ENCODE measurements at regions of chr16 and their contacts with region 1.

Region 1: GRCh38 chr16:71311553-71312158 is 22.5 kb upstream of the CMTR2 start:
- DNase-seq: peak; percentile 25
- ATAC-seq: no peak
- H3K4me3 Mint-ChIP-seq: no peak overlapping the region
- H3K27ac Mint-ChIP-seq: no peak overlapping the region
- H3K4me1 Mint-ChIP-seq: no peaks in the 10 kb centered on the region
- H3K27me3 Mint-ChIP-seq: peaks cover 33% of the 10 kb centered on the region
- CTCF ChIP-seq: peak; percentile 90

Region 2: GRCh38 chr16:71249399-71249798 is 62.3 kb before region 1 on chr16:
- CTCF ChIA-PET with region 1: interaction called, 24 read pairs
- POLR2A ChIA-PET with region 1: no interaction called
- intact Hi-C with region 1: no loop called
- DNase-seq: no peak
- ATAC-seq: no peak
- H3K4me3 Mint-ChIP-seq: no peak overlapping the region
- H3K27ac Mint-ChIP-seq: no peak overlapping the region
- H3K4me1 Mint-ChIP-seq: no peaks in the 10 kb centered on the region
- H3K27me3 Mint-ChIP-seq: no peaks in the 10 kb centered on the region
- CTCF ChIP-seq: no peak

Region 3: GRCh38 chr16:71293919-71294318 is 17.7 kb before region 1 on chr16:
- CTCF ChIA-PET with region 1: interaction called, 15 read pairs
- POLR2A ChIA-PET with region 1: no interaction called
- intact Hi-C with region 1: no loop called
- DNase-seq: no peak
- ATAC-seq: no peak
- H3K4me3 Mint-ChIP-seq: no peak overlapping the region
- H3K27ac Mint-ChIP-seq: no peak overlapping the region
- H3K4me1 Mint-ChIP-seq: no peaks in the 10 kb centered on the region
- H3K27me3 Mint-ChIP-seq: peaks cover 20% of the 10 kb centered on the region
- CTCF ChIP-seq: no peak

Region 4: GRCh38 chr16:71328151-71328550 is 16.5 kb after region 1 on chr16:
- CTCF ChIA-PET with region 1: interaction called, 12 read pairs
- POLR2A ChIA-PET with region 1: no interaction called
- intact Hi-C with region 1: no loop called
- DNase-seq: no peak
- ATAC-seq: no peak
- H3K4me3 Mint-ChIP-seq: no peak overlapping the region
- H3K27ac Mint-ChIP-seq: no peak overlapping the region
- H3K4me1 Mint-ChIP-seq: no peaks in the 10 kb centered on the region
- H3K27me3 Mint-ChIP-seq: peaks cover 3% of the 10 kb centered on the region
- CTCF ChIP-seq: no peak